ENCODE measurements at regions of chr20 and their contacts with region 1.

Region 1: DNA sequence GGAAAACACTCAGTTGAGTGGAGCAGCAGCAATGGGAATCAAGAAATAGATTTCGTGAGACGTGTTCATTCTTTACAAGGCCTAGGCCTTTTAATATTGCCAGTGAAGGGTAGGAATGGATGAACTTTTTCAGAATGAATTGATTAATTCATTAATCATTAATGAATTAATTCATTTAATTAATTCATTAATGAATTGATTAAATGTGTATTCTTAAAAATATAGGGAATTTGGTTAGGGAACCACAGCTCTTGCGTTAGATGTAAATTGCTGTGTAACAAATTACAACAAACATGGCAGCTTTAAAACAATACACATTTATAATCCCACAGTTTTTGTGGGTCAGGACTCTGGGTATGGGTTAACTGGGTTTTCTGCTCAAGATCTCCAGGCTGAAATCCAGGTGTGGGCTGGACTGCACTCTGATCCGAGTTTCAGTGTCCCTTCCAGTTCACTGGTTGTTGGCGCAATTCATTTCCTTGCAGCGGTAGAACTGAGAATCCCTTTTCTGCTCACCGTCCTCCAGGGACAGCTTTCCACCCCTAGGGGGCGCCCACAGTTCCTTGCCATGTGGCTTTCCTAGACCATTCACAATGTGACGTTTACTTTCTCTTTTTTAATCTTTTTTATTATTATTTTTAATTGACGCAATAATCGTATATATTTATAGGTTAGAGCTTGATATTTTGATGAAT is 32.8 kb upstream of the BCAS1 start:
- DNase-seq: peak; percentile 84
- H3K4me3 Mint-ChIP-seq: no peak overlapping the region
- H3K27ac Mint-ChIP-seq: no peak overlapping the region
- H3K4me1 Mint-ChIP-seq: peaks cover 2% of the 10 kb centered on the region
- H3K27me3 Mint-ChIP-seq: peaks cover 22% of the 10 kb centered on the region

Region 2: GRCh38 chr20:54199721-54200176 is 96.5 kb after region 1 on chr20:
- CTCF ChIA-PET with region 1: interaction called, 74 read pairs
- DNase-seq: peak; percentile 79
- H3K4me3 Mint-ChIP-seq: no peak overlapping the region
- H3K27ac Mint-ChIP-seq: no peak overlapping the region
- H3K4me1 Mint-ChIP-seq: no peaks in the 10 kb centered on the region
- H3K27me3 Mint-ChIP-seq: peaks cover 26% of the 10 kb centered on the region

Region 3: GRCh38 chr20:54207743-54208547 is 104.7 kb after region 1 on chr20 and contains the start of gene PFDN4:
- CTCF ChIA-PET with region 1: interaction called, 21 read pairs
- DNase-seq: peak; percentile 82
- H3K4me3 Mint-ChIP-seq: peak within 1 kb of the TSS; percentile 89
- H3K27ac Mint-ChIP-seq: peak within 1 kb of the TSS; percentile 97
- H3K4me1 Mint-ChIP-seq: peaks cover 25% of the 10 kb centered on the region
- H3K27me3 Mint-ChIP-seq: peaks cover 6% of the 10 kb centered on the region